ENCODE measurements at regions of chr2 and their contacts with region 1.

Region 1: DNA sequence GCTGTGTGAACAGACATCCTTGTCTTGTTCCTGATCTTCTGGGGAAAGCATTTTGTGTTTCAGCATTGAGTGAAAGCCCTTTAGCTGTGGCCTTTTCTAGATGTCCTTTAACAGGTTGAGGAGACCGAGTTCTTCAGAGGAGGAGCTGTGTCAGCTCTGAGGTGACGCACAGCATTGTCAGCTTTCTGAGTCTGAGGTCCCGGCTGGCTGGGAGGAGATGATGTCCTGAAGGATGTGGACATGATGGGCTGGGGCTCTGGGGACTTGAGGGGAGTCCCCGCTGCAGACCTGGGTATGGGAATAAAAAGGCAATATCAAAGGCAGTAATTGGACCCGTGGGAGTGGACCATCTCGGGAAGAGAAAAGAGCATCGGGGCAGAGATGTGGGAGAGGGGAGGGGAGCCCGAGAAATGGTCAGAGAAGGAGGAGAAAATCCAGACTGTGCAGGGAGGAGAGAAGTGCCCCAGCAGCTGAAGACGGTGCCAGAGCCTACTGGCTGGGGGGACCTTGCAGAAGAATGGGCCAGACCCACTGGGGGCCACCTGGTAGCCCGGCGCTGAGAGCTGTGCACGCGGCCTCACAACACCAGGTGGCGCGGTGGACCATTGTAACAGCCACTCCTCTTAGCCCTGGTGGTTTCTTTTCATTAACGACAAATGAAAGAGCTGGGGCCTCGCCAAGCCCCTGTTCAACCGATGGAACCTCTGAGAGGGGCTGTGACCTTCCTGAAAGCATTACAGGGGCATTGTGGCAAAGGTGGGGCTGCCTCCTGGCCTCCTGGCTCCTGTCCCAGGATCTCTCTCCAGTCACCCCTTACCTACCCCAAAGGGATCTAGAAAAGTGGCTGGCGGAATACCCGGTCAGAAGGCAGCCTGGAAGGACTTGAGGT is 61.6 kb downstream of the ST3GAL5 start:
- DNase-seq: peak; percentile 74 to 79 (median 78)
- ATAC-seq: peak; percentile 96 to 99 (median 98)
- H3K4me3 ChIP-seq: no peak overlapping the region
- H3K27ac ChIP-seq: no peak overlapping the region
- H3K4me1 ChIP-seq: no peaks in the 10 kb centered on the region
- H3K27me3 ChIP-seq: no peaks in the 10 kb centered on the region
- CTCF ChIP-seq: peak; percentile 91 to 92 (median 92)
- POLR2A ChIP-seq: no peak

Region 2: DNA sequence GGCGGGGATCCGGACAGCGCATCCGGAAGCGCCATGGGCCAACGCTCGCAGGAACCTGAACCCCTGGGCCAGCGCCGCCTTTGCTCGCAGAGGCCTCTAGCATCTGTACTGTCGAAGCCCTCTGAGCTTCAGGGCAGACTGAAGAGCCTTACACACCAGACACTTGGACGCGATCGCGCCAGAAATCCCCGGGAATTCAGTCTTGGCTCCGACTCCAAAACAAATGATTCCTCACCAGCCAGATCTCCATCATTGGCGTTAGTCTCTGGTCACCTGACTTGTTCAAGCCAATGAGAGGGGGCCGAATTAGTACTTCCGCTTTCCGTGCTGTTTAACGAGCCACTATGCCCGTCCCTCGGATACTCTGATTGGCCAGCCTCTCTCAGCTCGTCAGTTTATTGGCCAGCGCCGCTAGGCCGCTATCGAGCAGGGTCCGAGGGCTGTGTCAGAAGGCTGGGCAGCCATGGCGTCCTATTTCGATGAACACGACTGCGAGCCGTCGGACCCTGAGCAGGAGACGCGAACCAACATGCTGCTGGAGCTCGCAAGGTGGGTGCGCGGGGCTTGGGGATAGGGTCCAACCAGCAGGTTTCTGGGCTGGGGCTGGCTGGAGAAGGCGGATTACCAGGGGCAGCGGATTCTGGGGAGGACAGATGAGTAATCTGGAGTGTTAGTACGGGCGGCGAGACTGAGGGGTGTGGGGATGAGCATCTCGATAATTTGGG is 231.8 kb before region 1 on chr2 and contains the start of gene RNF181:
- intact Hi-C with region 1: no loop called
- DNase-seq: peak; percentile 93 to 97 (median 96)
- ATAC-seq: peak; percentile 93 to 97 (median 94)
- H3K4me3 ChIP-seq: peak within 1 kb of the TSS; percentile 77 to 95 (median 94)
- H3K27ac ChIP-seq: peak within 1 kb of the TSS; percentile 79 to 90 (median 87)
- H3K4me1 ChIP-seq: peaks cover 0 to 49% (median 17%) of the 10 kb centered on the region in 4 donors
- H3K27me3 ChIP-seq: no peaks in the 10 kb centered on the region
- CTCF ChIP-seq: no peak
- POLR2A ChIP-seq: peak; percentile 73
- total RNA-seq, gene RNF181: 54.5 to 123 (median 66.6) TPM

Region 3: GRCh38 chr2:86079981-86080911 is 253.0 kb after region 1 on chr2:
- intact Hi-C with region 1: loop called in 1 of 2 experiments (anchors 5 kb)
- DNase-seq: peak; percentile 85 to 87 (median 87)
- ATAC-seq: peak; percentile 90 to 93 (median 92)
- H3K4me3 ChIP-seq: no peak overlapping the region
- H3K27ac ChIP-seq: peak overlapping the region in 1 of 3 donors; percentile 15
- H3K4me1 ChIP-seq: peaks cover 0 to 20% (median 10%) of the 10 kb centered on the region in 4 donors
- H3K27me3 ChIP-seq: no peaks in the 10 kb centered on the region
- CTCF ChIP-seq: peak; percentile 83 to 92 (median 88)
- POLR2A ChIP-seq: no peak

Measured in right lobe of liver (tissue), 6 donors.